PC-9 (cell line): ENCODE measurements at regions of chr2 and their contacts with region 1.

Region 1: DNA sequence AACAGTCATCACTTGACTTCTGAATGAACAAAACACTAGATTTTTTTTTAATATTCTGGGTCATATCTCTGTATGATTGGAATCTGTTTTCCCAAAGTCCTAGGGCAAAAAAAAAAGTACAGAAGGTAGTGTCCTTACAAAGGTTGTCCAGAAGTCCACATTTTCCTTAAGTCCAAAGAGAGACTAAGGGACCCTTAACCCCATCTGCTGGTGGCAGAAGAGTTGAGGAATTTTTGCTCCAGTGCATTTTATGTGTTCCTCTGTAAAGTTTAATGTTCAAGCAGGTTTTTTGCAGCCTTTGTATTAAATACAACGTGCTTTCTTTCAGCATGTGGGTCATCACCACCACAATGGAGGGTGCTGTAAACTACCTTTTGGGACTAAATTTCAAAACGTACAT is 215.9 kb downstream of the SP3 start:
- DNase-seq: no peak
- H3K4me3 ChIP-seq: no peak overlapping the region
- H3K27ac ChIP-seq: no peak overlapping the region
- H3K4me1 ChIP-seq: no peaks in the 10 kb centered on the region
- H3K27me3 ChIP-seq: peaks cover 29% of the 10 kb centered on the region; the same call in 1 of the 2 replicates
- CTCF ChIP-seq: peak; percentile 65

Region 2: GRCh38 chr2:172046080-172046678 is 1703.1 kb before region 1 on chr2:
- CTCF ChIA-PET with region 1: no interaction called
- POLR2A ChIA-PET with region 1: interaction called, 48 read pairs
- intact Hi-C with region 1: no loop called
- DNase-seq: no peak
- H3K4me3 ChIP-seq: no peak overlapping the region
- H3K27ac ChIP-seq: peak overlapping the region; percentile 7
- H3K4me1 ChIP-seq: peaks cover 12% of the 10 kb centered on the region; the same call in 1 of the 2 replicates
- H3K27me3 ChIP-seq: no peaks in the 10 kb centered on the region
- CTCF ChIP-seq: no peak

Region 3: GRCh38 chr2:173374634-173375033 is 374.7 kb before region 1 on chr2:
- CTCF ChIA-PET with region 1: no interaction called
- POLR2A ChIA-PET with region 1: no interaction called
- intact Hi-C with region 1: no loop called
- DNase-seq: no peak
- H3K4me3 ChIP-seq: no peak overlapping the region
- H3K27ac ChIP-seq: no peak overlapping the region
- H3K4me1 ChIP-seq: no peaks in the 10 kb centered on the region
- H3K27me3 ChIP-seq: no peaks in the 10 kb centered on the region
- CTCF ChIP-seq: no peak

Region 4: DNA sequence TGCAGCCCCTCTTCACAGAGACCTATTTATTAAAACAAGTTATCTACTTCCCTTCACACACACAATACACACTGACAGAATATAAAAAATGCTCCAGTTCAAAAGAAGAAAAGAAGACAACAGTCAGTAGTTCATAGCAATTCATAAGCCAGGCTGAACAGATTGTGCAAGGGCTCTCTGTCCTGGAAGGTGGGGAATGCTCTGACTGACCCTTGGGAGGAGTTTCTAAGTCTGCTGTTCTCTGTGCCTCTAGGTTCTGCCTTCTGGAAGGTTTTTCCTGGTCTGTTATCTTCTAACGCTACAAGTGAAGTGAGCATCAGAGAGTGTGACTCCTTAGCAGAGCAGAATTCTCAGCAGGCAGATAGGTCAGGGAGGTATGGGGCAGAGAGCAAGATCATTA is 180.1 kb after region 1 on chr2:
- CTCF ChIA-PET with region 1: no interaction called
- POLR2A ChIA-PET with region 1: no interaction called
- intact Hi-C with region 1: no loop called
- DNase-seq: no peak
- H3K4me3 ChIP-seq: no peak overlapping the region
- H3K27ac ChIP-seq: no peak overlapping the region
- H3K4me1 ChIP-seq: peaks cover under 1% of the 10 kb centered on the region; the same call in 1 of the 2 replicates
- H3K27me3 ChIP-seq: no peaks in the 10 kb centered on the region
- CTCF ChIP-seq: no peak